Spleen (tissue), 13 donors: ENCODE measurements at regions of chr7 and their contacts with region 1.

Region 1: GRCh38 chr7:150737265-150738055 is at the start of gene GIMAP5:
- DNase-seq: peak; percentile 85
- H3K4me3 ChIP-seq: peak within 1 kb of the TSS; percentile 42 to 84 (median 62)
- H3K27ac ChIP-seq: peak within 1 kb of the TSS; percentile 51 to 90 (median 86)
- H3K4me1 ChIP-seq: peaks cover 10 to 86% (median 48%) of the 10 kb centered on the region in 6 donors
- H3K27me3 ChIP-seq: no peaks in the 10 kb centered on the region
- CTCF ChIP-seq: no peak
- POLR2A ChIP-seq: peak in 1 of 3 donors; percentile 38
- total RNA-seq, gene GIMAP5: 34.0 to 183 (median 90.6) TPM

Region 2: GRCh38 chr7:150685219-150686029 is 52.0 kb before region 1 on chr7 and contains the start of gene GIMAP2:
- intact Hi-C with region 1: loop called (anchors 10 kb)
- DNase-seq: no peak
- H3K4me3 ChIP-seq: peak within 1 kb of the TSS; percentile 55 to 83 (median 66)
- H3K27ac ChIP-seq: peak within 1 kb of the TSS; percentile 70 to 95 (median 93)
- H3K4me1 ChIP-seq: peaks cover 12 to 69% (median 40%) of the 10 kb centered on the region in 6 donors
- H3K27me3 ChIP-seq: no peaks in the 10 kb centered on the region
- CTCF ChIP-seq: no peak
- POLR2A ChIP-seq: no peak
- total RNA-seq, gene GIMAP2: 48.6 to 126 (median 85.4) TPM